ENCODE measurements at regions of chr19 and their contacts with region 1.

Region 1: DNA sequence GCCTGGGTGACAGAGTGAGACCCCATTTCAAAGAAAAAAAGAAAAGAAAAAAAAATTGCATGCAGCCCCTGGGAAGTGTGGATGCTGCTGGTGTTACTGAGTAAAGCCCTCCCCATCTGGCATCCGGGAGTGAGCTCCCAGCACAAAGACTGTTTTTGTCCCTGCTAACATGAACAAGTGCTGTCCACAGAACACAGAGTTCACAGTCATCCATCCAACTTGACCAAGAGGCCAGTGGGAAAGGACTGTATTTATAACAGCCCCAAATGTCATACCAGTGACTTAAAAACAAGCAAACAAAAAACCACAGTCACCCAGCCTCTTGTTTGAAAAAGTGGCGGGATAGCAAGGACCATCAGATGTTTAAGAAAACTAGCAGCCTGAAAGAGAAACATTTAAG is 10.8 kb downstream of the FBXO17 start:
- DNase-seq: no peak
- H3K4me3 ChIP-seq: no peak overlapping the region
- H3K4me3 Mint-ChIP-seq: no peak overlapping the region
- H3K27ac Mint-ChIP-seq: no peak overlapping the region
- H3K4me1 ChIP-seq: no peaks in the 10 kb centered on the region; the same call in 1 of the 2 replicates
- H3K4me1 Mint-ChIP-seq: peaks cover 11% of the 10 kb centered on the region
- H3K27me3 ChIP-seq: no peaks in the 10 kb centered on the region
- H3K27me3 Mint-ChIP-seq: no peaks in the 10 kb centered on the region
- CTCF ChIP-seq: no peak

Region 2: GRCh38 chr19:39038098-39038497 is 73.4 kb after region 1 on chr19:
- CTCF ChIA-PET with region 1: interaction called, 3 read pairs
- POLR2A ChIA-PET with region 1: no interaction called
- intact Hi-C with region 1: loop called (anchors 1 kb)
- DNase-seq: peak; percentile 66 to 71
- H3K4me3 ChIP-seq: no peak overlapping the region
- H3K4me3 Mint-ChIP-seq: no peak overlapping the region
- H3K27ac Mint-ChIP-seq: no peak overlapping the region
- H3K4me1 ChIP-seq: peaks cover 10% of the 10 kb centered on the region
- H3K4me1 Mint-ChIP-seq: peaks cover 13% of the 10 kb centered on the region
- H3K27me3 ChIP-seq: no peaks in the 10 kb centered on the region
- H3K27me3 Mint-ChIP-seq: no peaks in the 10 kb centered on the region
- CTCF ChIP-seq: peak in 1 of 2 experiments; percentile 45

Region 3: GRCh38 chr19:39115546-39116080 is 150.9 kb after region 1 on chr19:
- CTCF ChIA-PET with region 1: no interaction called
- POLR2A ChIA-PET with region 1: no interaction called
- intact Hi-C with region 1: loop called (anchors 2 kb)
- DNase-seq: no peak
- H3K4me3 ChIP-seq: no peak overlapping the region
- H3K4me3 Mint-ChIP-seq: no peak overlapping the region
- H3K27ac Mint-ChIP-seq: no peak overlapping the region
- H3K4me1 ChIP-seq: no peaks in the 10 kb centered on the region
- H3K4me1 Mint-ChIP-seq: no peaks in the 10 kb centered on the region
- H3K27me3 ChIP-seq: no peaks in the 10 kb centered on the region
- H3K27me3 Mint-ChIP-seq: no peaks in the 10 kb centered on the region
- CTCF ChIP-seq: no peak